Activated T-helper 2 cell treated with anti-CD3 and anti-CD28 coated beads, Interferon-gamma antibody, Interleukin-2, Interleukin-4, amounts not matched to agents 10 μg/mL and 5 μg/mL and 100 μg/mL, durations not matched to agents 14 hours and 24 hours and 36 hours (primary cell): ENCODE measurements at regions of chrX and their contacts with region 1.

Region 1: DNA sequence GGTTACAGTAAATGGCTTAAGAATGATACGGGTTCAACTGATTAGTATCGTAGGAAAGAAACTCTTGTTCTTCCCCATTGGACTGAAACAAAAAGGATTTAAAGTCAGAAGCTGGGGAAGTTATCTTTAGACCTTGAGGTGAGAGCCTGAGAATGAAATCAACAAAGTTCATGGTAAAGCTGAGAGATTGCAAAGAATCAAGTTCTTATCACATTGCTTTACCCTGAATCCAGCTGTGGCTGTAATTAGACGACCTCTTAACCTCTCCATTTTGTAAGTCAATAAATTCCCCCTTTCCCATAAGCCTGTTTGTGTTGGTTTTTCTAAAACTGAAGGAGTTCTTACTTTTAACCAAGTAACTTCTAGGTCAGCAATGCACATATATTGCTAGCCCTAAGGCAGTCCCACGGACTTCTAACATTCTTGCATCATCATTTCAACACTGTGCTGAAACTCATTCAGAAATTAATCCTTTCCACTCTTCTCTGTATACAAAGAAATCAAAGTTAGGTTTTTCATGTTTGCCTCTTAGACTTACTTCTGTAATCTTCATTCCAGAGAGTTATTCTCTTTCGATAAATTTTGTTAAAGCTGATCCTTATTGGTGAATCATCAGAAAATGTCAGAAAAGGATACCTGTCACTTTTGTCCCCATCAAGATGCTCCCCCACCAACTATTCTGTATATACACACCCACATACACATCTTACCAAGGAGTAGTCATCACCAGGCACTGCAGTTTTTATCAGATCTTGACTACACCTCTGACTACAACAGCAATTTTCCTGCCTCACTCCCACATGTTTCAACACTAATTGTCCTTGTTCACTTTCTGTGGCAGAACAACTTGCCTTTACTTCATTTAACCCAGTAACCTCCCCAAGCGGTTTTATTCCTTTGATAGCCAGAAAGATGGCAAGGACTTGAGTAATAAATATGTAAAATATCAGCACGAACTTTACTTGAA is 77.9 kb upstream of the STK26 start:
- DNase-seq: no peak
- H3K4me3 Mint-ChIP-seq: peak overlapping the region; percentile 22
- H3K27ac Mint-ChIP-seq: peak overlapping the region; percentile 79
- H3K4me1 Mint-ChIP-seq: peaks cover 30% of the 10 kb centered on the region
- H3K27me3 Mint-ChIP-seq: no peaks in the 10 kb centered on the region

Region 2: GRCh38 chrX:131894987-131895386 is 50.2 kb before region 1 on chrX:
- intact Hi-C with region 1: loop called (anchors 1 kb)
- DNase-seq: no peak
- H3K4me3 Mint-ChIP-seq: no peak overlapping the region
- H3K27ac Mint-ChIP-seq: peak overlapping the region; percentile 42
- H3K4me1 Mint-ChIP-seq: peaks cover 10% of the 10 kb centered on the region
- H3K27me3 Mint-ChIP-seq: no peaks in the 10 kb centered on the region

Region 3: DNA sequence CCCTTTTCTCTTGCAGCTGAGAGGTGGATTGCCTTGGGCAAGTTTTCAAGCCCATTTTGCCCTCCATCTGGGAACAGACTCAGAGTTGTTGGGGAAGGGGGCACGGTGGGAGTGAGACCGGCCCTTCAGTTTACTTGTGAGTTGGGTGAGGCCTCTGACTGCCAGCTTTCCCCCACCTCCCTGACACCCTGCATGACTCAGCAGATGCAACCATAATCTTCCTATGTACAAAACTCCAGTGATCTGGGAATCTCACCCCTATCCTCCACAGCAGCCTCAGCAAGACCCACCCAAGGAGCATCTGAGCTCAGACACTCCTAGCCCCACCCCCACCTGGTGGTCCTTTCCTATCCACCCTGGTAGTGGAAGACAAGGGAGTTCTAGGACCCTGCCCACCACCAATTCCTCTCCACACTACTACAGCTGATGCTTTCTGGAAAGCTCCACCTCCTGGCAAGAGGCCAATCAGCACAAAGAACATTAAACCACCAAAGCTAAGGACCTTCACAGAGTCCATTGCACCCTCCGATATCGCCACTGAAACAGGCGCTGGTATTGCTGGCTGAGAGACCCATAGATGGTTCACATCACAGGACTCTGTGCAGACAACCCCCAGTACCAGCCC is 21.5 kb before region 1 on chrX:
- intact Hi-C with region 1: no loop called
- DNase-seq: no peak
- H3K4me3 Mint-ChIP-seq: no peak overlapping the region
- H3K27ac Mint-ChIP-seq: no peak overlapping the region
- H3K4me1 Mint-ChIP-seq: peaks cover 2% of the 10 kb centered on the region
- H3K27me3 Mint-ChIP-seq: no peaks in the 10 kb centered on the region

Region 4: DNA sequence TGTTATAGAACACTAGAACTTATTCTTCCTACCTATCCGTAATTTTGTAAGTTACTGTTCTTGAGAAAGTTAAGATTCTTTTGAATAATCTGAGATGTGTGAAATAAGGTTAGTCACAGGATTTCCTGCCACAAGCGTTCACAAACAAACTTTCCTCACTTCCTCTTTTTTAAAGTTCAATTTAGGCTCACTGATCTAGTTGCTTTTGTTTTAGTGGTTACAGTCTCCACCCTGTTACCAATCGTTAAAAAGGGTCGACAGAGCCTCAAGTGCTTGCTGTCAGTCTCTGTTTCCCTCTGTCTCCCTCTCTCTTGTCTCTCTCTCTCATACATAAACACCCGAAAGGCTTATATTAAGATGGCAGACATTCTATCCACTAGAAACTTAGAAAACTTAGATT is 42.0 kb after region 1 on chrX:
- intact Hi-C with region 1: loop called (anchors 1 kb)
- DNase-seq: peak; percentile 10
- H3K4me3 Mint-ChIP-seq: peak overlapping the region; percentile 53
- H3K27ac Mint-ChIP-seq: peak overlapping the region; percentile 95
- H3K4me1 Mint-ChIP-seq: peaks cover 37% of the 10 kb centered on the region
- H3K27me3 Mint-ChIP-seq: no peaks in the 10 kb centered on the region

Region 5: GRCh38 chrX:132017431-132018185 is 72.4 kb after region 1 on chrX:
- intact Hi-C with region 1: loop called (anchors 2 kb)
- DNase-seq: no peak
- H3K4me3 Mint-ChIP-seq: no peak overlapping the region
- H3K27ac Mint-ChIP-seq: peak overlapping the region; percentile 73
- H3K4me1 Mint-ChIP-seq: peaks cover 37% of the 10 kb centered on the region
- H3K27me3 Mint-ChIP-seq: no peaks in the 10 kb centered on the region

Region 6: DNA sequence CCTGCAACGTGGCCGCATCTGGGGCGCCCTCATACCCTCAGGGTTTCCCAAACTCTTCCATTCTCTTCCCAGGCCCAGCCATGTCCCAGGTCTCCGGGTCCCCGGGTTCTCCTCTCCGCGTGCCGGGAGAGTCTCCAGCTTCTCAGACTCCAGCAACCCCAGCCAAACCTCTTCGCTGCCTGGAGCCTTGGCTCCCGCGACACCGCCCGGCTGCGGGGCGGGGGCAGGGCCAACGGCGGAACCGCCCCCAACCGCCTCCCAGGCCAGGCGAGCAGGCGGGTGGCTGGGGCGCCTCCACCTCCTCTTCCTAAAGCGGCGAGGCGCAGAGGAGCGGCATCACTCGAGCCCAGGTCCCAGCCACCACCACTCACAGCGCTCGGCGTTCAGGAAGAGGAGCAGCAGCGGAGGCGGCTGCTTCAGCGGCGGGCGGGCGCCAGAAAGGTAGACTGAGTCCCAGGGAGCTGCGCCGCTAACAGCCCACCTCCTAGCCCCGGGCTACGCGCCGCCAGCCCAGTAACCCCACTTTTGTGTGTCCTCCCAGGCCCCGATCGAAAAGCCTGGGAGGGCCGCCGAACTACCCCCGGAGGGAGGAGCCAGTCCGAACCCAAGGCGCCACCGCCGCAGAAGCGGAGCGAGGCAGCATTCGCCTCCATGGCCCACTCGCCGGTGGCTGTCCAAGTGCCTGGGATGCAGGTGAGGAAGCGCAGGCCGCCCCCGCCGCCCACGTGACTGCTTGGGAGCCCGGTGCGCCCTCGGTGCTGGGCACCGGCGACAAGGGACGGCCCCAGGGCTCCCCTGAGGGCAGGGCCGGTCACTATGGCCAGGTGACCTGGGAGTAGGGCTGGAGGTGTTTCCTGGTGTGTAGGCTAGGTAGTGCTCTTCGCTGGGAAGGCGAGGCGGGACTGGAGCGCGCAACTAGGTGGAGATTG is 78.0 kb after region 1 on chrX and contains the start of gene STK26:
- intact Hi-C with region 1: loop called (anchors 2 kb)
- DNase-seq: peak; percentile 77
- H3K4me3 Mint-ChIP-seq: peak within 1 kb of the TSS; percentile 91
- H3K27ac Mint-ChIP-seq: peak within 1 kb of the TSS; percentile 94
- H3K4me1 Mint-ChIP-seq: peaks cover 22% of the 10 kb centered on the region
- H3K27me3 Mint-ChIP-seq: no peaks in the 10 kb centered on the region
- total RNA-seq, gene STK26: 108 and 115 TPM in 2 replicates